GM12878 (cell line): ENCODE measurements at regions of chr15 and their contacts with region 1.

Region 1: DNA sequence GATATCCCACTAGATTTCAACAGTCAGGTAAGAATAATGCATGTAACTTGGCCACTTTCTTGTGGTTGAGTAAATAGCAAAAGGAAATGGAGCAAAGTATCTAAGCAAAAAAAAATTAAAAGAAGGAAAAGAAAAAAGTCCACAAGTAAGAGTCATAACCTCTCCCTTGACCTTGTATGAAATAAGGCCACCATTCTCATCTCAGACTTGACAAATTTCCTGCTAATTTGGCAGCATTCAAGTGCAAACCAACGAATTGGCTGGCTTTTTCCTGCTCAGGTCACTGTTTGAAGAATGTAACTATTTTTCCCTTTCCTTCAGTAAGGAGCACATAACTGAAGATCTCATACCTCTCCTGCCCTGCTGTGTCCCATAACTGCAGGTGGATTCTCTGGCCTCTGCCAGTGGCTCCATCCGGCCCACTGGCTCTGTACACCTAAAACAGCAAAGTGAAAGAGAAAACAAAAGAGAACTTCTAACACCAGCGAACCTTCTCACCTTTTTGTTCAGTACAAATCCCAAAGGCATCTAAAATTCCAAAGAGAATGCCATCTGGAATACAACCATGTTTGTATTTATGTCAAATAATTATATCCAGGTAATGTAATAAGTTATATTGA is 33.4 kb upstream of the RSL24D1 start:
- DNase-seq: no peak
- ATAC-seq: peak; percentile 74
- H3K4me3 ChIP-seq: no peak overlapping the region
- H3K27ac ChIP-seq: no peak overlapping the region
- H3K4me1 ChIP-seq: peaks cover 2% of the 10 kb centered on the region; the same call in 1 of the 2 replicates
- H3K27me3 ChIP-seq: no peaks in the 10 kb centered on the region
- CTCF ChIP-seq: no peak
- EP300 ChIP-seq: no peak
- POLR2A ChIP-seq: no peak
- RAD21 ChIP-seq: no peak

Region 2: GRCh38 chr15:55204464-55204863 is 25.7 kb before region 1 on chr15:
- CTCF ChIA-PET with region 1: no interaction called
- POLR2A ChIA-PET with region 1: no interaction called
- RAD21 ChIA-PET with region 1: no interaction called
- SMC1A ChIA-PET with region 1: no interaction called
- in situ Hi-C with region 1: no loop called
- intact Hi-C with region 1: no loop called
- DNase-seq: no peak
- ATAC-seq: no peak
- H3K4me3 ChIP-seq: no peak overlapping the region
- H3K27ac ChIP-seq: no peak overlapping the region
- H3K4me1 ChIP-seq: no peaks in the 10 kb centered on the region
- H3K27me3 ChIP-seq: no peaks in the 10 kb centered on the region
- CTCF ChIP-seq: no peak
- EP300 ChIP-seq: no peak
- POLR2A ChIP-seq: no peak
- RAD21 ChIP-seq: no peak

Region 3: GRCh38 chr15:55250392-55250791 is 20.2 kb after region 1 on chr15:
- CTCF ChIA-PET with region 1: interaction called, 4 read pairs
- POLR2A ChIA-PET with region 1: interaction called, 3 read pairs
- RAD21 ChIA-PET with region 1: interaction called, 3 read pairs
- SMC1A ChIA-PET with region 1: interaction called, 14 read pairs
- in situ Hi-C with region 1: no loop called
- intact Hi-C with region 1: no loop called
- DNase-seq: no peak
- ATAC-seq: no peak
- H3K4me3 ChIP-seq: no peak overlapping the region
- H3K27ac ChIP-seq: no peak overlapping the region
- H3K4me1 ChIP-seq: peaks cover 4% of the 10 kb centered on the region
- H3K27me3 ChIP-seq: no peaks in the 10 kb centered on the region
- CTCF ChIP-seq: no peak
- EP300 ChIP-seq: no peak
- POLR2A ChIP-seq: no peak
- RAD21 ChIP-seq: no peak